CD14-positive monocyte (primary cell): ENCODE measurements at regions of chr7 and their contacts with region 1.

Region 1: GRCh38 chr7:157851501-157852067 is 514.8 kb downstream of the DNAJB6 start:
- DNase-seq: peak; percentile 59 to 73 (median 73)
- H3K4me3 ChIP-seq: peak overlapping the region in 2 of 3 experiments; percentile 13 to 56
- H3K4me3 Mint-ChIP-seq: peak overlapping the region; percentile 70 to 80
- H3K27ac ChIP-seq: peak overlapping the region; percentile 82 to 84
- H3K27ac Mint-ChIP-seq: peak overlapping the region; percentile 94 to 98 (median 96)
- H3K4me1 ChIP-seq: peaks cover 58 to 62% of the 10 kb centered on the region in 2 donors
- H3K4me1 Mint-ChIP-seq: peaks cover 60% of the 10 kb centered on the region
- H3K27me3 ChIP-seq: no peaks in the 10 kb centered on the region
- H3K27me3 Mint-ChIP-seq: peaks cover 3% of the 10 kb centered on the region in 3 donors
- CTCF ChIP-seq: no peak

Region 2: GRCh38 chr7:157490457-157490912 is 361.1 kb before region 1 on chr7:
- intact Hi-C with region 1: loop called in 1 of 2 experiments (anchors 10 kb)
- DNase-seq: peak; percentile 87 to 98 (median 87)
- H3K4me3 ChIP-seq: no peak overlapping the region
- H3K4me3 Mint-ChIP-seq: no peak overlapping the region
- H3K27ac ChIP-seq: peak overlapping the region; percentile 58 to 67
- H3K27ac Mint-ChIP-seq: peak overlapping the region; percentile 74 to 92 (median 87)
- H3K4me1 ChIP-seq: peaks cover 12 to 15% of the 10 kb centered on the region in 2 donors
- H3K4me1 Mint-ChIP-seq: peaks cover 11% of the 10 kb centered on the region
- H3K27me3 ChIP-seq: peaks cover 0 to 12% of the 10 kb centered on the region in 2 donors
- H3K27me3 Mint-ChIP-seq: peaks cover 14 to 19% (median 19%) of the 10 kb centered on the region in 3 donors
- CTCF ChIP-seq: no peak